Activated naive CD4-positive, alpha-beta T cell treated with anti-CD3 and anti-CD28 coated beads for 36 hours (primary cell): ENCODE measurements at regions of chr4 and their contacts with region 1.

Region 1: DNA sequence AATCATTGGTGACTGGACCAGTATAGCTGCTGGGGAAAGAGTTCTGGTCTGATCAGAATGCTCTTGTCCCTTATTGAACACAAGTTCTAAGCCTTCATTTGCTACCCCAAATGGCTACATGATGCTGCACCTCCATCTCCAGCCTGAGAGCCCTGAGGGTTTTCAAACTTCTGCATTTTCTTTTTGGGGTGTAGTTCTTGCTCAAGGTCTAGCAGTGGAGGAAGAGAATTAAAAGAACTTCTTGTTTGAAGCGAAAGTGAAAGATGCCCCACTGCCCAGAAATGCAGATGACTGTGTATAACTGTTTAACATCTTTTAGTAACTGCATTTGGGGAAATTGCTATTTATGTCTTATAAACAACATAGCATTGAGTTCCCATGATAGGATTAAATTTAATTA is 38.5 kb downstream of the LAMTOR3 start:
- DNase-seq: peak; percentile 43
- H3K4me3 Mint-ChIP-seq: no peak overlapping the region
- H3K27ac Mint-ChIP-seq: peak overlapping the region; percentile 74
- H3K4me1 Mint-ChIP-seq: peaks cover 66% of the 10 kb centered on the region
- H3K27me3 Mint-ChIP-seq: no peaks in the 10 kb centered on the region

Region 2: DNA sequence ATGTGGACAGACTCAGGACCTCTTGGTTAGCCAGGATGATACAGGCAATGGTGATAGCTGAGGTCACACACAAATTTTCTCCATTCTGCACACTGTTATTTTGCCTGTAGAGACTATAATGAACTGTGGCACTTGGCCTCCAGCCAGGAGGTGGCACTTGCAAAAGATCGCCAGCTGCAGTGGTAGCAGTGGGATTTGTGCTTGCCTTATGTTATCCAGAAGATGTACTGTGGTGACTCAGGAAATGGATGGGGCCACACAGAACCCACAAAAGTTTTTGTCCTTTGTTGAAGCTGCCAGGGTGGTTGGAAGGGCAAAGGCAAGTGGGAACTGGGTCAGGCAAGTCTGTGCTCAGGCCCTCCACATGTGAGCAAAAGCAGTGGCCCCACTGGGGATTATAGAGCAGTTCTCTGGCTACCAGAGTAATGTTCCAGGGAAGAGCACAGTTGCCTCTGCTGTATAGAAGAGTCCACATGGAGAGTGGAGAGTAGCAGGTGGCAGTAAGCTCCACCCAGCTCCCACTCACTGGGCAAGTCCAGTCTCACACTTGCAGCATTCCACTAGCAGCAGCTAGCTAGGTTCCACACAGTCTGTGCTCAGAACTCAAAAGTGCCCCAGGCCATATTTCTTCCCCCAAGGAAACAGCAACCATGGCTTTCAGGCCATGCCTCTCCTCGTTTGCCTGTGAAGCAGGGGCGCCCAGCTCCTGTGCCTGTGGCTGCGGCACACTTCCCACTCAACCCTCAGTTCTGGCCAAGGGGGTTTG is 350.7 kb before region 1 on chr4:
- CTCF ChIA-PET with region 1: no interaction called
- intact Hi-C with region 1: loop called (anchors 1 kb)
- DNase-seq: no peak
- H3K4me3 Mint-ChIP-seq: no peak overlapping the region
- H3K27ac Mint-ChIP-seq: no peak overlapping the region
- H3K4me1 Mint-ChIP-seq: peaks cover 49% of the 10 kb centered on the region
- H3K27me3 Mint-ChIP-seq: no peaks in the 10 kb centered on the region

Region 3: DNA sequence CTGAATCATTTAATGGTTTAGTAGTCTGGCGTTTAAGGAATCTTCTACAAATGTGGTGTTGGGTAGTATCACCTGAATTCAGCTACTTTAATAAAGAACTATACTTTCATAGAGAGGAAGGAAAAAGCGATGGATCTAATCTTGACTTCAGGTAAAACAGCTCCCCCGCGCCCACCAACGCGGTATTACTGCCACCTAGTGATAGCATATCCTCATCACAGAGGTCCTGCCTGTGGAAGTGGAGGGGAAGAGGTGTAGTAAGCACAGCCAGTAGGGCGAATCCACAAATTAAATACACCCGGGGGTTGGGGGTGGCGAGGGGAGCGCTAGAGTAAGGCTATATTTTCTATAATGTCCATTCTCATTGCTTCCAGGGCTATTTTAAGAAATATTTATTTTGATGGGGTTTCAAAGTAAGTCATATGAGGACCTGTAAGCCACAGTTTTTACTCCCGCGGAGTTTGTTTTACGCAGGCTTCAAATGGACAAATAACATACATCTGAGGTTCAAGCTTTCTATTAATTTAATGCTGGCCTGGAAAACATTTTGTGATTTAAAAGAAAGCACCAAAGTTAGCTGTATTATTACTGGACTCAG is 47.3 kb before region 1 on chr4:
- CTCF ChIA-PET with region 1: interaction called, 18 read pairs
- intact Hi-C with region 1: no loop called
- DNase-seq: peak; percentile 87
- H3K4me3 Mint-ChIP-seq: no peak overlapping the region
- H3K27ac Mint-ChIP-seq: no peak overlapping the region
- H3K4me1 Mint-ChIP-seq: peaks cover 14% of the 10 kb centered on the region
- H3K27me3 Mint-ChIP-seq: peaks cover 8% of the 10 kb centered on the region

Region 4: DNA sequence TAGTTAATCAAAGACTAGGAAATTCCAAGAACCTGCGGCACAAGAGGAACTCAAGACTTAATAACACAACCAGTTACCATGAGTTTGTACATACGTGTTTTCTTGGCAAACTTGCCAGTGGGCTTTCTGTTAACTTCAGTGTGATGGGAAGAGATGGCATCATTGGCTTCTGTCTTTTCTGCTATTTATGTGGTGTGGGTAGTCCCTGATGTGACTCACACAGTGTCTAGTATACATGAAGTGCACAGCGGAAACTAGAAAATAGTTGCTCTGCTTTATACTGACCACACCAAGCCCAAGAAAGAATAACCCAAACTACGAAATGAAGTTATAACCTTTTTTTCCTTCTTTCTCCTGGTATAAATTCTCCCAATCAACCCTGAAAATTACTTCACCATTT is 14.5 kb before region 1 on chr4:
- CTCF ChIA-PET with region 1: no interaction called
- intact Hi-C with region 1: loop called (anchors 2 kb)
- DNase-seq: no peak
- H3K4me3 Mint-ChIP-seq: no peak overlapping the region
- H3K27ac Mint-ChIP-seq: peak overlapping the region; percentile 57
- H3K4me1 Mint-ChIP-seq: peaks cover 36% of the 10 kb centered on the region
- H3K27me3 Mint-ChIP-seq: no peaks in the 10 kb centered on the region

Region 5: DNA sequence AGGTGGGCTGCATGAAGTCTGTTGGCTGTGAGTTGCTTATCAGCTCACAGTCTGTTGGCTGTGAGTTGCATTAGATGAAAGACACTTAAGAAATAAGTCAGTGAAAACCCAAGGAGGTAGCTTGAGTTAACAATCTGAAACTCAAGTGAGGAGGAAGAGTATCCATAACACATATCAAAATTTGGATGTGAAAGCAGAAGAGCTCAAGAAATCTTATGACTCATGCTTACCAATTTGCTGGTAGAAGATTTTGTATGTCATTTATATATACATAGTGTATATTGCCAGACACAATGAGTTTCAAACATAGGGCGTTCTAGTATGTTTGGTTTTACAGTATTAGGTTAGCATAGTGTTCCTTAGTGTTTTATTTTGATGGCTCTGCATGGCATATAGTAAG is 227.2 kb after region 1 on chr4:
- CTCF ChIA-PET with region 1: no interaction called
- intact Hi-C with region 1: loop called (anchors 1 kb)
- DNase-seq: peak; percentile 35
- H3K4me3 Mint-ChIP-seq: no peak overlapping the region
- H3K27ac Mint-ChIP-seq: peak overlapping the region; percentile 89
- H3K4me1 Mint-ChIP-seq: peaks cover 72% of the 10 kb centered on the region
- H3K27me3 Mint-ChIP-seq: peaks cover 2% of the 10 kb centered on the region

Region 6: GRCh38 chr4:100208964-100209363 is 353.3 kb after region 1 on chr4:
- CTCF ChIA-PET with region 1: no interaction called
- intact Hi-C with region 1: no loop called
- DNase-seq: no peak
- H3K4me3 Mint-ChIP-seq: no peak overlapping the region
- H3K27ac Mint-ChIP-seq: no peak overlapping the region
- H3K4me1 Mint-ChIP-seq: no peaks in the 10 kb centered on the region
- H3K27me3 Mint-ChIP-seq: peaks cover 16% of the 10 kb centered on the region

Region 7: GRCh38 chr4:100823066-100823992 is 967.7 kb after region 1 on chr4:
- CTCF ChIA-PET with region 1: no interaction called
- intact Hi-C with region 1: loop called (anchors 5 kb)
- DNase-seq: peak; percentile 53
- H3K4me3 Mint-ChIP-seq: no peak overlapping the region
- H3K27ac Mint-ChIP-seq: peak overlapping the region; percentile 82
- H3K4me1 Mint-ChIP-seq: peaks cover 9% of the 10 kb centered on the region
- H3K27me3 Mint-ChIP-seq: peaks cover under 1% of the 10 kb centered on the region